Stomach (tissue), 19 donors: ENCODE measurements at regions of chr18 and their contacts with region 1.

Region 1: DNA sequence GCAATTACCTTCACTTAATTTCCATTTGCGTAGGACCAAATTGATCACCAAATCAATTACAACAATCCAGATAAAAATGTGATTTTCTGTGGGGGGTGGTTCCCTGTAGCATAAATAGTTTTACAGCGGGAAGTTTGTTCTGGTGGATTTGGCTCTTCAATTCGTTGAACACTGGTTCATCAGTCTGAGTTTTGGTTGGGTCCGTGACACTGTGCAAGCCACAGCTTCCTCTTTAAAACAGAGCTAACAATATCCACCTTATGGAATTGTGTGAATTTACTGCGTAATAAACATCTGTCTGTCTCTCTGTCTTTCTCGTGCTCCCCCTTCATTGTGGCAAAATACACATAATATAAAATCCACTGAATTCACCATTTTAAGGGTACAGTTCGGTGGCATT is 310.8 kb downstream of the TGIF1 start:
- DNase-seq: no peak
- H3K4me3 ChIP-seq: no peak overlapping the region
- H3K27ac ChIP-seq: no peak overlapping the region
- H3K4me1 ChIP-seq: no peaks in the 10 kb centered on the region
- H3K27me3 ChIP-seq: no peaks in the 10 kb centered on the region
- CTCF ChIP-seq: no peak
- EP300 ChIP-seq: no peak
- POLR2A ChIP-seq: no peak

Region 2: GRCh38 chr18:3454365-3455089 is 306.2 kb before region 1 on chr18:
- intact Hi-C with region 1: no loop called
- DNase-seq: peak in 1 of 2 donors; percentile 83
- H3K4me3 ChIP-seq: peak overlapping the region; percentile 69 to 86 (median 78)
- H3K27ac ChIP-seq: peak overlapping the region in 4 of 5 donors; percentile 99
- H3K4me1 ChIP-seq: peaks cover 45 to 71% (median 57%) of the 10 kb centered on the region in 4 donors
- H3K27me3 ChIP-seq: no peaks in the 10 kb centered on the region
- CTCF ChIP-seq: peak in 4 of 7 experiments; percentile 39 to 70 (median 64)
- EP300 ChIP-seq: no peak
- POLR2A ChIP-seq: no peak

Region 3: DNA sequence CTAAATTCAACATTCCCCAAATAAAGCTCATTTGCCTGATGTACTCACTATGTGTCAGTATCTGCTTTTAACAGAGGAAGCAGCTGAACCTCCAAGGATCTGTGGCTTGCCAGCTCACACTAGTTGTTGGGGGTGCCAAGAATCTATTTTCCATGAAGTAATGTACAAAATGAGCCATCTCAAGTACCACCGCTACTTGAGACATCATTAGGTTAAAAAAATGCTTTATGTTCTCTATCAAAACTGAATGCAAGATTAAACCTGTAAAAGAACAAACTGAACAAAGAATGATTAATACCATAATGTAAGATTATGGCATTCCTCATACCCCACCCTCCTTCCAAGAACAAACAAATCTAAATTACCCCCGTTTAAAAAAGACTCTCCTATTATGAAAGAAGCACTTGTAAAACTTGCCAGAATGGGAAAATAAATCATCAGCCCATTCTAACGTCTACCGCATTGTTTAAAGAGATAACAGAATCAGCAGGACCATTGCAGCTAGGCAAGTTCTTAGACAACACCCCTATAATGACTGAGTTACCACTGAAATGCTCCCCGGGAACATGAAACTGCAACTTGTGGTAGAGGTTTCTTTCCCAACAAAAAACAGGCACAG is 222.7 kb after region 1 on chr18:
- intact Hi-C with region 1: loop called (anchors 10 kb)
- DNase-seq: peak in 1 of 2 donors; percentile 15
- H3K4me3 ChIP-seq: no peak overlapping the region
- H3K27ac ChIP-seq: no peak overlapping the region
- H3K4me1 ChIP-seq: peaks cover 0 to 23% (median 4%) of the 10 kb centered on the region in 4 donors
- H3K27me3 ChIP-seq: no peaks in the 10 kb centered on the region
- CTCF ChIP-seq: no peak
- EP300 ChIP-seq: no peak
- POLR2A ChIP-seq: no peak